AG04450 (cell line): ENCODE measurements at regions of chr12 and their contacts with region 1.

Region 1: GRCh38 chr12:50132505-50133135 is 20.6 kb downstream of the COX14 start:
- DNase-seq: no peak
- H3K4me3 ChIP-seq: no peak overlapping the region
- H3K27ac ChIP-seq: no peak overlapping the region
- H3K27me3 ChIP-seq: no peaks in the 10 kb centered on the region
- CTCF ChIP-seq: peak; percentile 36

Region 2: GRCh38 chr12:50084775-50085614 is 47.6 kb before region 1 on chr12 and contains the start of gene SMARCD1:
- CTCF ChIA-PET with region 1: interaction called, 11 read pairs
- POLR2A ChIA-PET with region 1: interaction called, 3 read pairs
- DNase-seq: peak; percentile 81
- H3K4me3 ChIP-seq: peak within 1 kb of the TSS; percentile 82
- H3K27ac ChIP-seq: peak within 1 kb of the TSS; percentile 87
- H3K27me3 ChIP-seq: no peaks in the 10 kb centered on the region
- CTCF ChIP-seq: peak; percentile 53
- polyA plus RNA-seq, gene SMARCD1: 57.2 and 65.1 TPM in 2 replicates

Region 3: DNA sequence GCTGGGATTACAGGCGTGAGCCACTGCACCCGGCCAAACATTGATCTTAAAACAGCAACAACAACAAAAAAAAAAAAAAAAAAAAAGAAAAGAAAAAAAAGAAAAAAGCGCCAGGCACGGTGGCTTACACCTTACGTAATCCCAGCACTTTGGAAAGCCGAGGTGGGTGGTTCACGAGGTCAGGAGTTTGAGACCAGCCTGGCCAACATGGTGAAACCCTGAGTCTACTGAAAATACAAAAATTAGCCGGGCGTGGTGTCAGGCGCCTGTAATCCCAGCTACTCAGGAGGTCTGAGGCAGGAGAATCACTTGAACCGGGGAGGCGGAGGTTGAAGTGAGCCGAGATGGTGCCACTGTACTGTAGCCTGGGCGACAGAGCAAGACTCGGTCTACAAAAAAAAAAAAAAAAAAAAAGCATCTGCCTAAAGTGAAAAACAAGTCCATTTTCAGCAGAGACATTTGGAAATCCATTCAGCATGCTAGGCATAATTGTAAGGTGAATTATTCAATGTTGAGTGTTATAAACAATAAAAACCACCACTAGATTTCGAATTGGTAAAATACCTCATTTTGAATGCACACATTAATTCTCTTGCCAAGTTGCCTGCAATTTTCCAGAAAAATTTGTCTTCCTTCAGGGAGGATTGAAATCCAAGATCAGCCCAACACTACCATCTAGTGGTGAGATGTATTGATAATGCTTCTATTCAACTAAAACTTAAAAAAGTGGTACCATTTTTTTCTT is 42.5 kb after region 1 on chr12:
- CTCF ChIA-PET with region 1: interaction called, 13 read pairs
- POLR2A ChIA-PET with region 1: no interaction called
- DNase-seq: peak; percentile 67
- H3K4me3 ChIP-seq: no peak overlapping the region
- H3K27ac ChIP-seq: no peak overlapping the region
- H3K27me3 ChIP-seq: no peaks in the 10 kb centered on the region
- CTCF ChIP-seq: peak; percentile 62

Region 4: DNA sequence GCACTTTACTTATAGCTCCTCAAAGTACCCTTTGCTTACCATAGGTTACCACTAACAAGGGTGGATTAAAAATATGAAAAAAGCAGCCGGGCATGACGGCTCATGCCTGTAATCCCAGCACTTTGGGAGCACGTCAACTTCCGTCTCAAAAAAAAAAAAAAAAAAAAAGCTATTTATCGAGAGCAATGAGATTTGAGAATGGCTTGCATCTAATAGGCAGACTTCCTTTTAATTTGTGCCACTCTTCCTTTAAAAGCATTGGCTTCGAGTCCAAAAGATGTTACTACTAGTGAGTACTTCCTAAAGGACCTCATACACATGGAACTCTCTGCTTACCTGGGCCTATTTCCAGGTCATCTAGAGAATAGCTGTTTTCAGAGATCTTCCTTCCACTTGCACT is 73.0 kb after region 1 on chr12:
- CTCF ChIA-PET with region 1: interaction called, 13 read pairs
- POLR2A ChIA-PET with region 1: no interaction called
- DNase-seq: no peak
- H3K4me3 ChIP-seq: no peak overlapping the region
- H3K27ac ChIP-seq: no peak overlapping the region
- H3K27me3 ChIP-seq: no peaks in the 10 kb centered on the region
- CTCF ChIP-seq: no peak